ENCODE measurements at regions of chr1 and their contacts with region 1.

Region 1: DNA sequence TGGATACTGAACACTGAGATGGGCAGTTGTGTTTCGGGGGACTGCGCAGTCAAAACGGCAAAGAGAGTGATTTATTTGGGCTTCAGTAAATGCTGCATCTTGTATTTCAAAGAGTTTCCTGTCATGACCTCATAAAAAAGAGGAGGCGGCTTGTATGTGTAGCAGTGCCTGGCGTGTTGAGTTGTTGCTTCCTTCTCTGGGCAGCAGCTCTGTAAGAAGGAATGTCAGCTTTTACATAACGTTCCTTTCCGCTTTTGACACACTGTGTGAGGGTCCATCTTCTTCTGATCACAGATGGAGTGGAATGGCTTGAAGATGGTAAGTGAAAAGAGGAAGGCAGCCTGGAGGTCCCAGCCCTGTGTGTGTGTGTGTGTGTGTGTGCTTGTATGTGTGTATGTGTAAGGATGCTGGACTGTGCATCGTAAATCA is 941 bp downstream of the ELAVL4 start:
- DNase-seq: no peak
- H3K4me3 ChIP-seq: peak overlapping the region; percentile 39 to 59
- H3K27ac ChIP-seq: peak overlapping the region in 1 of 2 experiments; percentile 92; a peak in 2 of 4 replicates
- H3K4me1 ChIP-seq: no peaks in the 10 kb centered on the region; a peak in 2 of 4 replicates
- H3K27me3 ChIP-seq: peaks cover 5% of the 10 kb centered on the region; the same call in 1 of the 2 replicates
- CTCF ChIP-seq: no peak
- EP300 ChIP-seq: no peak
- RAD21 ChIP-seq: no peak

Region 2: GRCh38 chr1:48916130-48917069 is 1193.3 kb before region 1 on chr1:
- CTCF ChIA-PET with region 1: interaction called, 17 read pairs
- POLR2A ChIA-PET with region 1: interaction called, 7 read pairs
- DNase-seq: peak; percentile 63
- H3K4me3 ChIP-seq: peak overlapping the region in 1 of 2 experiments; percentile 20; a peak in 1 of 4 replicates
- H3K27ac ChIP-seq: peak overlapping the region; percentile 78 to 98
- H3K4me1 ChIP-seq: peaks cover 13 to 31% of the 10 kb centered on the region in 2 experiments
- H3K27me3 ChIP-seq: no peaks in the 10 kb centered on the region
- CTCF ChIP-seq: peak; percentile 74
- EP300 ChIP-seq: no peak
- RAD21 ChIP-seq: peak; percentile 91

Region 3: GRCh38 chr1:50123071-50123470 is 13.4 kb after region 1 on chr1:
- CTCF ChIA-PET with region 1: interaction called, 10 read pairs
- POLR2A ChIA-PET with region 1: no interaction called
- DNase-seq: no peak
- H3K4me3 ChIP-seq: no peak overlapping the region
- H3K27ac ChIP-seq: no peak overlapping the region; a peak in 1 of 4 replicates
- H3K4me1 ChIP-seq: peaks cover 0 to 22% of the 10 kb centered on the region in 2 experiments; a peak in 2 of 4 replicates
- H3K27me3 ChIP-seq: no peaks in the 10 kb centered on the region
- CTCF ChIP-seq: no peak
- EP300 ChIP-seq: no peak
- RAD21 ChIP-seq: no peak

Region 4: DNA sequence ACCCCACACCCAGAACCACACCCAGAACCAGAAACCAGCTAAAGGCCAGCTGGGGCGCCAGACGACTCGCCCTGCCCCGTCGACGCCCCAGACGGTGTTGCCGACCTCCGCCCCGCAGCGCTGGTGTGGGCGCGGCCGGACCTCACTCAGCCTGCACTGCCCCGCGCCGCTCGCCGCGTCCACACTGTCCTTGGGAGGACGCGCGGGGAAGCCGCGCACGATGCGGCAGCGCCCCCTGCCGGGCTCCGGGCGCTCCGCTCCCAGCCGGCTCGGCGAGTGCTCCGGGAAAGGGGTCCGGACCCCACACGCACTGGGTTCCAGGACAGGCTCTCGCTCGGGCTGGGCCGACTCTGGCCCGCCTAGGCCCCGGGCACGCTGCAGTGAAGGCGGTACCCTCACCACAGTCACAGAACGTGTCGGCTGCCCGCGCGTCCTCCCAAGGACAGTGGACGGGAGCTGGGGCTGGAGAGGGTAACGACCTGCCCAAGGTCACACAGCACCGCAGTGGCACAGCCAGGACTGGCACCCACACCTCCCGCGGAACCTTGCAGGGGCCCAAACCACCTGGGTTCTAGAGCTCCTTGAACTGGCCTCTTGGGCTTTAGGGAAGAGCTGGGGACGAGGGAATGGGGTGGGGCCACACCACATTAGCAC is 223.4 kb after region 1 on chr1:
- CTCF ChIA-PET with region 1: interaction called, 83 read pairs
- POLR2A ChIA-PET with region 1: interaction called, 7 read pairs
- DNase-seq: peak; percentile 90
- H3K4me3 ChIP-seq: peak overlapping the region; percentile 23 to 25; a peak in 2 of 4 replicates
- H3K27ac ChIP-seq: peak overlapping the region in 1 of 2 experiments; percentile 78; a peak in 2 of 4 replicates
- H3K4me1 ChIP-seq: peaks cover 0 to 57% of the 10 kb centered on the region in 2 experiments; a peak in 2 of 4 replicates
- H3K27me3 ChIP-seq: no peaks in the 10 kb centered on the region
- CTCF ChIP-seq: peak; percentile 69
- EP300 ChIP-seq: no peak; a peak in 1 of 4 replicates
- RAD21 ChIP-seq: peak; percentile 92

Region 5: GRCh38 chr1:50348449-50349241 is 239.0 kb after region 1 on chr1:
- CTCF ChIA-PET with region 1: interaction called, 17 read pairs
- POLR2A ChIA-PET with region 1: interaction called, 13 read pairs
- DNase-seq: peak; percentile 77
- H3K4me3 ChIP-seq: no peak overlapping the region
- H3K27ac ChIP-seq: peak overlapping the region in 1 of 2 experiments; percentile 48; a peak in 1 of 4 replicates
- H3K4me1 ChIP-seq: peaks cover 0 to 23% of the 10 kb centered on the region in 2 experiments; a peak in 2 of 4 replicates
- H3K27me3 ChIP-seq: no peaks in the 10 kb centered on the region
- CTCF ChIP-seq: peak; percentile 82
- EP300 ChIP-seq: peak in 1 of 2 experiments; percentile 30; a peak in 1 of 4 replicates
- RAD21 ChIP-seq: peak; percentile 99

Measured in SK-N-SH (cell line).